Motor neuron (in vitro differentiated cells): ENCODE measurements at regions of chr1 and their contacts with region 1.

Region 1: GRCh38 chr1:47725992-47726855 is 271.0 kb downstream of the TRABD2B start:
- ATAC-seq: peak; percentile 91 to 96 (median 94)
- H3K4me3 ChIP-seq: peak overlapping the region in 2 of 5 donors; percentile 2 to 15
- H3K27ac ChIP-seq: no peak overlapping the region
- H3K4me1 ChIP-seq: peaks cover 0 to 15% of the 10 kb centered on the region in 2 donors

Region 2: GRCh38 chr1:47424336-47424982 is 301.8 kb before region 1 on chr1:
- in situ Hi-C with region 1: loop called in 1 of 9 experiments (anchors 10 kb)
- ATAC-seq: peak in 6 of 8 experiments; percentile 29 to 98 (median 55)
- H3K4me3 ChIP-seq: no peak overlapping the region
- H3K27ac ChIP-seq: no peak overlapping the region
- H3K4me1 ChIP-seq: no peaks in the 10 kb centered on the region

Region 3: GRCh38 chr1:47558601-47559593 is 167.3 kb before region 1 on chr1:
- in situ Hi-C with region 1: no loop called
- ATAC-seq: peak in 1 of 8 experiments; percentile 65
- H3K4me3 ChIP-seq: no peak overlapping the region
- H3K27ac ChIP-seq: no peak overlapping the region
- H3K4me1 ChIP-seq: peaks cover 6 to 16% of the 10 kb centered on the region in 2 donors

Region 4: DNA sequence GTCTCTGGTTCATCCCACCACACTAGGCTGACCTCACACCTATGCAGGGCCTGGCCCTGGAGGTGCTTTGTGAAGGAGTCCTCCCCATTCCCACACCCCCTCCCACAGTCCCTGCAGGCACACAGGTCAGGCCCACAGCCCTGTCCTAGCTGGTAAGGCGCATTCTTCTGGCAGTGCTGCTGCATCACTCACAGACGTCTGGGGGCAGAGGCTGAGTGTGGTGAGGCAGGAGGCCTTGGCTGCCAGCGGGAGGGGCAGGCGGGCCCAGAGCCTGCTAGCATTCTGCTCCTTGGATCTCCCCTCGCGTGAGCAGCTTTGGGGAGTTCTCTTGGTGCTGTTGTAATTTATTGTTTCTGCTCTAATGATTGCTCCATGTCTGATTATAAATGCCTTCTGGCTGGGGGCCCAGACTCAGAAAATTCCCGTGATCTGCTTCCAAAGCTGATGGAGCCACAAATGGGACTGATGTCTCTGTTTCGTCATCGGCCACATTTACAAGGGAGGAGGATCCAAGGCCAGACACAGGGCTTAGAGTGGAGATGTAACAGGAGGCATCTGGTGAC is 208.1 kb after region 1 on chr1:
- in situ Hi-C with region 1: loop called in 2 of 9 experiments (anchors 25 kb)
- ATAC-seq: peak; percentile 78 to 97 (median 95)
- H3K4me3 ChIP-seq: no peak overlapping the region
- H3K27ac ChIP-seq: no peak overlapping the region
- H3K4me1 ChIP-seq: peaks cover 9 to 24% of the 10 kb centered on the region in 2 donors

Region 5: GRCh38 chr1:48061162-48062136 is 335.2 kb after region 1 on chr1:
- in situ Hi-C with region 1: loop called in 4 of 9 experiments (anchors 10 to 25 kb)
- ATAC-seq: peak; percentile 50 to 86 (median 80)
- H3K4me3 ChIP-seq: no peak overlapping the region
- H3K27ac ChIP-seq: no peak overlapping the region
- H3K4me1 ChIP-seq: peaks cover 0 to 4% of the 10 kb centered on the region in 2 donors

Region 6: DNA sequence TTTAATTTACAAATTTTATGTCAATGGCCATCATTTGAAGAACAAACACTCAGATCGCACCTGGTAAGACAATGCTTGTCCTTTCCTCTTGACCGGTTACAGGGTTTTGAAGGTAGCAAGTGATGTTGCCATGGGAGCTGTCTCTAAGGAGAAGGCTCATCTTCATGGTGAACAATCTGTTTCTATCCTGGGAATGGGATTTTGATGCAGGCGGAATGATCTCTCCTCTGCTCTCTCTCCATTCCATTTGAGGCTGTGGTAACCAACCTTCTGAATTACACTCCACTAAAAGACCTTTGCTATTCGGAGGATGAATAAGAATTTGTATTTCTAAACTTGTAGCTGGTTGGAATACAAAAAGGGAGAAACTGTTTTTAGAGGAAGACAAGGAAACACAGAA is 438.3 kb after region 1 on chr1:
- in situ Hi-C with region 1: no loop called
- ATAC-seq: peak in 1 of 8 experiments; percentile 63
- H3K4me3 ChIP-seq: no peak overlapping the region
- H3K27ac ChIP-seq: no peak overlapping the region
- H3K4me1 ChIP-seq: peaks cover 0 to 3% of the 10 kb centered on the region in 2 donors

Region 7: DNA sequence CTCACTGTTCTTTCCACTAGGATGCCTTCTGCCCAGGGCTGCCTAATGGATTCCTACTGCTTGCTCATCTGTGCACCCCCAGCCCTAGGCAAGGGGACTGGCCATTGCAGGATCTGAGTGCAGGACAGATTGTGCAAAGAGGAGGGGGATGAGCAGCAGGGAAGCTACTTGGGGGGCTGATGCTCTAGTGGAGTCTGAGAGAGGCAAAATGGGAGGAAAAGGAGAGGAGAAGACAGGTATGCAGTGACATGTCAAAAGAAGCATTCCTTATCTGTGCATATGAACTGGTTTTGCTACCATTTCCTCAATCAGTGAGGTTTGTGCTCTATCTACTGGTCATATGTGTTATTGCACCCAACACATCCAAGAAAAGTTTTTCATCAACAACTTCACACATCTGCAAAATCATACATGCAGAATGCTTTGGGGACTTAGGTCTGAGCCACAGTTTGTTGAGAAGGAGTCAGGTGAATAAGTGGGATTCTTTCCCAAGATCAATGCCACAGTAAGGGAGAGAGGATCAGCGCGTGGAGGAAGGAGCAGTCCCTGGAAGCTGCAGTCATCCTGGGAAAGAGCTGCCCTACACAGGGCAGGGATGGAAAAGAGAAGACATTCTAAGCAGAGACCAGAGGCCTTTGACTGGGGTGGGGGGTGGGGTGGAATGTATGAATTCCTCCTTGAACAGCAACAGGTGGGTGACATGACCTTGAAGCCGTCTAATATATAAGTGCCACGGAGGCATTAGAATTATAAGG is 510.7 kb after region 1 on chr1:
- in situ Hi-C with region 1: loop called in 1 of 9 experiments (anchors 25 kb)
- ATAC-seq: peak; percentile 46 to 82 (median 61)
- H3K4me3 ChIP-seq: no peak overlapping the region
- H3K27ac ChIP-seq: no peak overlapping the region
- H3K4me1 ChIP-seq: no peaks in the 10 kb centered on the region